Activated CD8-positive, alpha-beta T cell treated with anti-CD3 and anti-CD28 coated beads, Interleukin-2, amount 10 ng/mL, durations not matched to agents 7 days and 5 days (primary cell): ENCODE measurements at regions of chr12 and their contacts with region 1.

Region 1: GRCh38 chr12:120437754-120438494 is at the start of gene COX6A1:
- DNase-seq: peak; percentile 99
- ATAC-seq: peak; percentile 98
- H3K4me3 Mint-ChIP-seq: peak within 1 kb of the TSS; percentile 83
- H3K27ac Mint-ChIP-seq: peak within 1 kb of the TSS; percentile 92
- H3K4me1 Mint-ChIP-seq: peaks cover 24% of the 10 kb centered on the region
- H3K27me3 Mint-ChIP-seq: no peaks in the 10 kb centered on the region
- total RNA-seq, gene COX6A1: 337 to 351 TPM

Region 2: DNA sequence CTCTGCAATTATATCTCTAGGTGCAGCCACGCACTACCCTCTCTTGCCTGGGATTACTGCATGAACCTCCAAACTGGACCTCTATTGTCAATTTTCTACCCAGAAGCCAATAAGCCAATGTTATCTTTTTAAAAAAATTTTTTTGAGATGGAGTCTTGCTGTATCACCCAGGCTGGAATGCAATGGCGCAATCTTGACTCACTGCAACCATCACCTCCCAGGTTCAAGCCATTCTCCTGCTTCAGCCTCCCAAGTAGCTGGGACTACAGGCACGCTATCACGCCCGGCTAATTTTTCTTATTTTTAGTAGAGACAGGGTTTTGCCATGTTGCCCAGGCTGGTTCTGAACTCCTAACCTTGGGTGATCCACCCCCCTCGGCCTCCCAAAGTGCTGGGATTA is 161.2 kb before region 1 on chr12:
- CTCF ChIA-PET with region 1: no interaction called
- POLR2A ChIA-PET with region 1: no interaction called
- DNase-seq: no peak
- ATAC-seq: no peak
- H3K4me3 Mint-ChIP-seq: no peak overlapping the region
- H3K27ac Mint-ChIP-seq: no peak overlapping the region
- H3K4me1 Mint-ChIP-seq: no peaks in the 10 kb centered on the region
- H3K27me3 Mint-ChIP-seq: no peaks in the 10 kb centered on the region

Region 3: DNA sequence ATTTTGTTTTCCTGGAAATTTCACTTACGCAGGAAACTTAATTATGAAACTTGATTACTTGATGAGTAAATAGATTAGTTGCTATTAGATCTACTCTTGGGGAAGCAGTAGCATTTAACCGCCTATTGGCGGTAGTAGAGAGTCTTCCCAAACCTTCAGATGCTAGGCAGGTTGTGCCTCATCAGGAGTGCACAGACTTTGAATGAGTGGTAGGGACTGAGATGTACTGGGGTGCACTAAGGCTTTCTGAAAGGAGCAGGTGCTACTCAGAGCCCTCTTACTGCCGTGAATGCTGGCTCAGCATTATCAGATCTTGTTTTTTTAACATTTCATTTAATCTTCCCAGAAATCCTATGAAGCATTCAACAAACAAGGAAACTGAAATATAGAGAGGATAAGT is 16.1 kb after region 1 on chr12:
- CTCF ChIA-PET with region 1: interaction called, 12 read pairs
- POLR2A ChIA-PET with region 1: interaction called, 4 read pairs
- DNase-seq: peak; percentile 46
- ATAC-seq: peak; percentile 83
- H3K4me3 Mint-ChIP-seq: no peak overlapping the region
- H3K27ac Mint-ChIP-seq: no peak overlapping the region
- H3K4me1 Mint-ChIP-seq: peaks cover 4% of the 10 kb centered on the region
- H3K27me3 Mint-ChIP-seq: no peaks in the 10 kb centered on the region